ENCODE measurements at regions of chr17 and their contacts with region 1.

Region 1: DNA sequence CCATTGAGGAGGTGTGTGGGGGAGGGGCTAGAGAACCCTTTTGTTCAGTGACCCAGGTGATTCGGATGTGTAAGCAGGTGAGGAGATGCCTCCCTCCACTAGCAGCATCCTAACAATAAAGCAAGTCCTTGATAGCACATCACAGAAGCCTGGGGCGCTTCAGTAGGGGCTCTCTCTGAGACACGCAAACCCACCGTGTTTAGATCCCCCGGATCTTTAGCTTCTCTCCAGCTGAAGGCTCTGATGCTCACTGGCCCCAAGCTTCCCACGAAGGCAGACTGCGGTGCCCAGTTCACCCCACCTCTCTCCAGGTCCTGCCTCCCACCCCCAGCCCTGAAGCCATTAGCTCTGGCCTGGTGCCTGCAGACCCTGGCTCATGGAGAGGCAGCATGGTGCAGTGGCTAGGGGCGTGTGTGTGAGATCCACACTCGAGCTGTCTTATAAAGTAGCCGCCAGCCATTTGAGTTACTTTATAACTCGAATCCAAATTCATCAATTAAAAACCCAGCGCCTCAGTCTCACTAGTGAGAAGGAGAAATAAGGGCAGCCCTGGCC is 204.7 kb upstream of the TNRC6C start:
- DNase-seq: no peak
- H3K4me3 ChIP-seq: no peak overlapping the region
- H3K27ac ChIP-seq: no peak overlapping the region
- H3K4me1 ChIP-seq: no peaks in the 10 kb centered on the region
- H3K27me3 ChIP-seq: peaks cover 17% of the 10 kb centered on the region
- CTCF ChIP-seq: no peak
- EP300 ChIP-seq: no peak
- POLR2A ChIP-seq: no peak

Region 2: GRCh38 chr17:76584427-76585090 is 1169.2 kb before region 1 on chr17:
- in situ Hi-C with region 1: no loop called
- intact Hi-C with region 1: loop called (anchors 5 kb)
- DNase-seq: no peak
- H3K4me3 ChIP-seq: peak overlapping the region; percentile 47 to 67 (median 59)
- H3K27ac ChIP-seq: peak overlapping the region; percentile 30 to 71 (median 58)
- H3K4me1 ChIP-seq: peaks cover 3 to 20% (median 18%) of the 10 kb centered on the region in 4 donors
- H3K27me3 ChIP-seq: peaks cover 55% of the 10 kb centered on the region
- CTCF ChIP-seq: no peak
- EP300 ChIP-seq: no peak
- POLR2A ChIP-seq: no peak

Region 3: GRCh38 chr17:77645072-77646045 is 108.4 kb before region 1 on chr17:
- in situ Hi-C with region 1: no loop called
- intact Hi-C with region 1: no loop called
- DNase-seq: no peak
- H3K4me3 ChIP-seq: no peak overlapping the region
- H3K27ac ChIP-seq: no peak overlapping the region
- H3K4me1 ChIP-seq: no peaks in the 10 kb centered on the region
- H3K27me3 ChIP-seq: peaks cover 14% of the 10 kb centered on the region
- CTCF ChIP-seq: peak in 1 of 5 experiments; percentile 3
- EP300 ChIP-seq: no peak
- POLR2A ChIP-seq: no peak